GM23248 (cell line): ENCODE measurements at regions of chr6 and their contacts with region 1.

Region 1: DNA sequence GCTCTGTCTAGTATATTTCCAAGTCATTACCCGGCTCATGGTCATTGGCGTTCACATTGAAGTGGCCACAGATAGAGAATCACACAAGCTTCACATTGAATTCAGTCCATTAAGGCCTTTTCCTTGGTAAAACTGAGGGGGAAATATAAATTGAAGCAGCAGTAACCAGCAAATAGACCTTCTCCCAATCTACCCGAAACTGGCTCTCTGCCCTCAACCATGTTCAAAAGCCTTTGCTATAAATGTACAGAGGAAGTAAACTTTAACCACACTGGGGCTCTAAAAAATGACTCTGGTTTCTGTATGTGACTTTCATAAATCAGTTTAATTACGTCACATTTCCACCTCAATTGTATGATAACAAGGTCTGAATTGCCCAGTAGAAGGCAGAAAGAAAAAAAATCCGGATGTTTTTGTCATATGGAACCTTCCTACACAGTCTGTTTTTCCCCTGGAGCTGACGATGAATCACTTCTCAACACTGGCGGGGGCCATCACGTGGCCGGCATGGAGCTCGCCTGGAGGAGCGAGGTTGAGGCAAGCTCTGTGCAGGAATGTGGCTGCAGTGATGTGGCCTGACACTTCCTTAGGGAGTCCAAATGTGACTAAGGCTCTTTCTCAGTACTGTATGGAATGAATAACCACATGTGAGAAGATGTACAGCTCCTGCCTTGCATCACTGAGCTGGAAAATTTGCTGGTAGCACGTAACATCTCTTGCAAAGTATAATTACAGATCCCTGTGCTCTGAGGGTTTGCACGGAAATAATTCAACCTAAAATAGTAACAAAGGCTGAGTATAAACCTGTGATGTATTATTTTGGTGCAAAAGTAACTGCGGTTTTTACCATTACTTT is 58.6 kb upstream of the SNX9 start:
- DNase-seq: peak; percentile 100
- H3K4me3 ChIP-seq: peak overlapping the region; percentile 37
- H3K27ac ChIP-seq: peak overlapping the region; percentile 99
- H3K4me1 ChIP-seq: peaks cover 61% of the 10 kb centered on the region
- H3K27me3 ChIP-seq: no peaks in the 10 kb centered on the region

Region 2: DNA sequence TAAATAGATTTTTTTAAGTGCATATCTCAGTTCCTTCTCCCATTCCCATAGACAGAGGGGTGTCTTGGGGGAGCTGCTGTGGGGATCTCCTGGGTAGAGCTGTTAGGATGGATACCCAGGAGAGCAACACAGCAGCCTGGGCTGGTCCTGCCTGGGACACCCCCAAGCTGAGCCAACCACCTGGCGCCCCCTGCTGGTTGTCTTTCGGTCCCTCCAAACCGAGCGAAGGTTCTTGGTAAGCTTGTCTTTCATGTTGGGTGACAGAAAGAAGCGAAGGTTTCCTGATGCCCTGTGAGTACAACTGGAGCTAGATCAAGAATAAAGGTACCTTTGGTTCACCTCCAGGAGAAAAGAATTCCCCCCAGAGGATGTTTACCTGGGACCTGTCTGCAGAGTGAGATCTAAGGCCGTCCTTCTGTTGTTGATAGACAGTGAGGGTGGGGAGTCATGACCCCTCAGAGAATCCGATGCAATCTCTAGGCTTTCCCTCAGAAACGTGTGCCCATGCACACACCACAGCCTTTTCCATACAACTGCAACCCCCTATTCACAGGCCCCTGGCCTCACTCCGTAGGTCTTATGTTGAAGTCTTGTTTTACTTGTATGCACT is 109.4 kb after region 1 on chr6:
- in situ Hi-C with region 1: no loop called
- DNase-seq: peak; percentile 76
- H3K4me3 ChIP-seq: no peak overlapping the region
- H3K27ac ChIP-seq: no peak overlapping the region
- H3K4me1 ChIP-seq: peaks cover 13% of the 10 kb centered on the region
- H3K27me3 ChIP-seq: no peaks in the 10 kb centered on the region

Region 3: GRCh38 chr6:158072083-158072721 is 307.8 kb after region 1 on chr6:
- in situ Hi-C with region 1: loop called (anchors 25 kb)
- DNase-seq: peak; percentile 82
- H3K4me3 ChIP-seq: no peak overlapping the region
- H3K27ac ChIP-seq: peak overlapping the region; percentile 33
- H3K4me1 ChIP-seq: peaks cover 27% of the 10 kb centered on the region
- H3K27me3 ChIP-seq: no peaks in the 10 kb centered on the region

Region 4: GRCh38 chr6:158143700-158144099 is 379.3 kb after region 1 on chr6:
- in situ Hi-C with region 1: no loop called
- DNase-seq: peak; percentile 46
- H3K4me3 ChIP-seq: no peak overlapping the region
- H3K27ac ChIP-seq: peak overlapping the region; percentile 57
- H3K4me1 ChIP-seq: peaks cover 24% of the 10 kb centered on the region
- H3K27me3 ChIP-seq: no peaks in the 10 kb centered on the region